ENCODE measurements at regions of chr15 and their contacts with region 1.

Region 1: GRCh38 chr15:88897456-88898194 is 2.3 kb upstream of the HAPLN3 start:
- DNase-seq: peak; percentile 86
- ATAC-seq: peak; percentile 80
- H3K4me3 Mint-ChIP-seq: no peak overlapping the region
- H3K27ac Mint-ChIP-seq: no peak overlapping the region
- H3K4me1 Mint-ChIP-seq: peaks cover 35% of the 10 kb centered on the region
- H3K27me3 Mint-ChIP-seq: no peaks in the 10 kb centered on the region

Region 2: GRCh38 chr15:88331280-88331679 is 566.3 kb before region 1 on chr15:
- CTCF ChIA-PET with region 1: no interaction called
- POLR2A ChIA-PET with region 1: no interaction called
- intact Hi-C with region 1: no loop called
- DNase-seq: peak; percentile 82
- ATAC-seq: peak; percentile 72
- H3K4me3 Mint-ChIP-seq: no peak overlapping the region
- H3K27ac Mint-ChIP-seq: no peak overlapping the region
- H3K4me1 Mint-ChIP-seq: no peaks in the 10 kb centered on the region
- H3K27me3 Mint-ChIP-seq: peaks cover 6% of the 10 kb centered on the region

Region 3: GRCh38 chr15:88674661-88675060 is 223.0 kb before region 1 on chr15:
- CTCF ChIA-PET with region 1: no interaction called
- POLR2A ChIA-PET with region 1: no interaction called
- intact Hi-C with region 1: no loop called
- DNase-seq: no peak
- ATAC-seq: no peak
- H3K4me3 Mint-ChIP-seq: no peak overlapping the region
- H3K27ac Mint-ChIP-seq: no peak overlapping the region
- H3K4me1 Mint-ChIP-seq: no peaks in the 10 kb centered on the region
- H3K27me3 Mint-ChIP-seq: peaks cover 20% of the 10 kb centered on the region

Region 4: DNA sequence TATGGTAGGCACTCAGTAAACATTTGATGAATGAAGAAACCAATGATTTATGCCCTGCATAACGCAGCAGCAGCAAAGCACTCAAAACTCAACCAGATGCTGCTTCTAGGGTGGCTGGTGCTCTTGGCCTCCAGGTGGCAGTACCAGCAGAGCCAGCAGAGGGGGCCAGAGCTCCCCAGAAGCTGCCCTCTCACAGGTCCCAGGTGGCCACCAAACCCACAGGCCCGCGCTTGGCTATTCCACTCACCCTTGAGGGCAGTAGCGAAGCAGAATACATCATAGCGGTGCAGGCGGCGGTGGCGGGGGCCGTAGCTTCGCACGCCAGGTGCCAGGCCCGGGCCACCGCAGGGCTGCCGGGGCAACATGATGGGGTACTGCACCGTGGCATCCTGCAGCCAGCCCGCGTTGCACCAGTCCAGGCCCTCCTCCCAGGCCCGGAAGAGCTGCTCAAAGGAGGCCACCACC is 18.9 kb before region 1 on chr15:
- CTCF ChIA-PET with region 1: interaction called, 15 read pairs
- POLR2A ChIA-PET with region 1: no interaction called
- intact Hi-C with region 1: no loop called
- DNase-seq: peak; percentile 68
- ATAC-seq: peak; percentile 72
- H3K4me3 Mint-ChIP-seq: no peak overlapping the region
- H3K27ac Mint-ChIP-seq: no peak overlapping the region
- H3K4me1 Mint-ChIP-seq: no peaks in the 10 kb centered on the region
- H3K27me3 Mint-ChIP-seq: no peaks in the 10 kb centered on the region

Region 5: GRCh38 chr15:89017370-89018066 is 119.9 kb after region 1 on chr15:
- CTCF ChIA-PET with region 1: interaction called, 73 read pairs
- POLR2A ChIA-PET with region 1: no interaction called
- intact Hi-C with region 1: loop called (anchors 1 kb)
- DNase-seq: peak; percentile 93
- ATAC-seq: peak; percentile 88
- H3K4me3 Mint-ChIP-seq: peak overlapping the region; percentile 47
- H3K27ac Mint-ChIP-seq: peak overlapping the region; percentile 55
- H3K4me1 Mint-ChIP-seq: peaks cover 17% of the 10 kb centered on the region
- H3K27me3 Mint-ChIP-seq: peaks cover 3% of the 10 kb centered on the region

Region 6: GRCh38 chr15:89243691-89244471 is 346.3 kb after region 1 on chr15 and contains the start of gene FANCI:
- CTCF ChIA-PET with region 1: no interaction called
- POLR2A ChIA-PET with region 1: no interaction called
- intact Hi-C with region 1: loop called in 1 of 2 experiments (anchors 2 kb)
- DNase-seq: peak; percentile 98
- ATAC-seq: peak; percentile 96
- H3K4me3 Mint-ChIP-seq: peak within 1 kb of the TSS; percentile 93
- H3K27ac Mint-ChIP-seq: peak within 1 kb of the TSS; percentile 93
- H3K4me1 Mint-ChIP-seq: peaks cover 29% of the 10 kb centered on the region
- H3K27me3 Mint-ChIP-seq: no peaks in the 10 kb centered on the region
- total RNA-seq, gene FANCI: 150 to 199 TPM

Region 7: GRCh38 chr15:89893696-89894455 is 996.3 kb after region 1 on chr15 and contains the start of gene AP3S2:
- CTCF ChIA-PET with region 1: no interaction called
- POLR2A ChIA-PET with region 1: no interaction called
- intact Hi-C with region 1: no loop called
- DNase-seq: peak; percentile 96
- ATAC-seq: peak; percentile 82
- H3K4me3 Mint-ChIP-seq: peak within 1 kb of the TSS; percentile 98
- H3K27ac Mint-ChIP-seq: peak within 1 kb of the TSS; percentile 97
- H3K4me1 Mint-ChIP-seq: peaks cover 43% of the 10 kb centered on the region
- H3K27me3 Mint-ChIP-seq: no peaks in the 10 kb centered on the region
- total RNA-seq, gene AP3S2: 12.4 to 15.3 TPM

Measured in activated CD4-positive, alpha-beta T cell treated with anti-CD3 and anti-CD28 coated beads for 36 hours (primary cell).